Gastrocnemius medialis (tissue), 4 donors: ENCODE measurements at regions of chr13 and their contacts with region 1.

Region 1: GRCh38 chr13:26698392-26699196 is 62.0 kb downstream of the GPR12 start:
- DNase-seq: peak; percentile 50 to 74
- ATAC-seq: peak; percentile 85 to 92
- H3K4me3 ChIP-seq: peak overlapping the region in 1 of 4 donors; percentile 12
- H3K27ac ChIP-seq: no peak overlapping the region
- H3K4me1 ChIP-seq: peaks cover 0 to 3% of the 10 kb centered on the region in 2 donors
- H3K27me3 ChIP-seq: no peaks in the 10 kb centered on the region
- CTCF ChIP-seq: peak; percentile 87 to 95 (median 92)
- POLR2A ChIP-seq: no peak

Region 2: GRCh38 chr13:26179344-26179743 is 519.2 kb before region 1 on chr13:
- in situ Hi-C with region 1: loop called in 3 of 4 experiments (anchors 5 to 10 kb)
- intact Hi-C with region 1: loop called (anchors 1 kb)
- DNase-seq: no peak
- ATAC-seq: no peak
- H3K4me3 ChIP-seq: no peak overlapping the region
- H3K27ac ChIP-seq: no peak overlapping the region
- H3K4me1 ChIP-seq: no peaks in the 10 kb centered on the region
- H3K27me3 ChIP-seq: no peaks in the 10 kb centered on the region
- CTCF ChIP-seq: no peak
- POLR2A ChIP-seq: no peak

Region 3: GRCh38 chr13:26442541-26442940 is 256.1 kb before region 1 on chr13:
- in situ Hi-C with region 1: no loop called
- intact Hi-C with region 1: no loop called
- DNase-seq: no peak
- ATAC-seq: no peak
- H3K4me3 ChIP-seq: no peak overlapping the region
- H3K27ac ChIP-seq: no peak overlapping the region
- H3K4me1 ChIP-seq: no peaks in the 10 kb centered on the region
- H3K27me3 ChIP-seq: no peaks in the 10 kb centered on the region
- CTCF ChIP-seq: no peak
- POLR2A ChIP-seq: no peak

Region 4: DNA sequence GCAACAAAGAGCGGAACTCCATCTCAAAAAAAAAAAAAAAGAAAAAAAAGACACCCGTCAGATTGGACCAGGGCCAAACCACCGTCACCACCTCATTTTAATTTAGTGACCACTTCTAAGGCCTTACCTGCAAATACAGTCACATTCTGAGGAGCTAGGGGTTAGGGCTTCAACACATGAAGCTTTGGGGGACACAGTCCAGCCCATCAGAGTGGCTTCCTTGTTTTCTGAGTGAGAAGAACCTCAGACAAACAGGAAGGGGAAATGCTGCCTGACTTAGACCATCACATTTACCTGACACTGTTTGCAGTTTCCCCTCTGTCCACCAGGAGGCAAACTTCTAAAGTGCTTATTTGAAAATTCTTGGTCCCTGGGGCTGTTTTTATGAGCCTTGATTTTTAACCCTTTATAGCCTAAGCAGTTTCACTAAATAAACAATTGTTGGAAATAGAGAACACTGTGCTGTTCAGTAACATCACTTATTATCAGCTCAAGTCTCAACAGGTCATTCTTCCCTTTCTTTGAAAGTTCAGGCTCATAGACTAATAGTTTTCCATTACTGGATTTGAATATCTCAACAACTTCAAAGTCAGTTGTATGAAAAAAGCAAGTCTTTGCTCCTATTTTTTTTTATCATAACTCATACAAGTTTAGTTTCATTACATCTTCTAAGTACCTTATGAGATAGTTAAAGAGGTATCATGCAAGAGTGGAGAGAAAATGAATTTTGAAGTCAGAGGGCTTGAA is 216.0 kb before region 1 on chr13:
- in situ Hi-C with region 1: loop called in 2 of 4 experiments (anchors 10 to 25 kb)
- intact Hi-C with region 1: loop called (anchors 1 kb)
- DNase-seq: peak in 1 of 2 donors; percentile 46
- ATAC-seq: peak in 1 of 2 donors; percentile 39
- H3K4me3 ChIP-seq: peak overlapping the region in 3 of 4 donors; percentile 3 to 29 (median 20)
- H3K27ac ChIP-seq: no peak overlapping the region
- H3K4me1 ChIP-seq: no peaks in the 10 kb centered on the region
- H3K27me3 ChIP-seq: no peaks in the 10 kb centered on the region
- CTCF ChIP-seq: peak; percentile 58 to 80 (median 66)
- POLR2A ChIP-seq: no peak

Region 5: GRCh38 chr13:26502826-26503225 is 195.8 kb before region 1 on chr13:
- in situ Hi-C with region 1: loop called in 3 of 4 experiments (anchors 10 to 25 kb)
- intact Hi-C with region 1: no loop called
- DNase-seq: peak; percentile 37 to 63
- ATAC-seq: peak; percentile 55 to 66
- H3K4me3 ChIP-seq: no peak overlapping the region
- H3K27ac ChIP-seq: no peak overlapping the region
- H3K4me1 ChIP-seq: no peaks in the 10 kb centered on the region
- H3K27me3 ChIP-seq: no peaks in the 10 kb centered on the region
- CTCF ChIP-seq: no peak
- POLR2A ChIP-seq: no peak